B cell (primary cell): ENCODE measurements at regions of chr1 and their contacts with region 1.

Region 1: GRCh38 chr1:54094001-54094729 is 40.8 kb downstream of the TCEANC2 start:
- DNase-seq: no peak
- ATAC-seq: no peak
- H3K4me3 ChIP-seq: no peak overlapping the region
- H3K4me3 Mint-ChIP-seq: no peak overlapping the region
- H3K27ac ChIP-seq: no peak overlapping the region
- H3K27ac Mint-ChIP-seq: no peak overlapping the region
- H3K4me1 ChIP-seq: peaks cover 0 to 6% of the 10 kb centered on the region in 2 donors
- H3K4me1 Mint-ChIP-seq: no peaks in the 10 kb centered on the region
- H3K27me3 ChIP-seq: no peaks in the 10 kb centered on the region
- H3K27me3 Mint-ChIP-seq: no peaks in the 10 kb centered on the region
- CTCF ChIP-seq: no peak

Region 2: DNA sequence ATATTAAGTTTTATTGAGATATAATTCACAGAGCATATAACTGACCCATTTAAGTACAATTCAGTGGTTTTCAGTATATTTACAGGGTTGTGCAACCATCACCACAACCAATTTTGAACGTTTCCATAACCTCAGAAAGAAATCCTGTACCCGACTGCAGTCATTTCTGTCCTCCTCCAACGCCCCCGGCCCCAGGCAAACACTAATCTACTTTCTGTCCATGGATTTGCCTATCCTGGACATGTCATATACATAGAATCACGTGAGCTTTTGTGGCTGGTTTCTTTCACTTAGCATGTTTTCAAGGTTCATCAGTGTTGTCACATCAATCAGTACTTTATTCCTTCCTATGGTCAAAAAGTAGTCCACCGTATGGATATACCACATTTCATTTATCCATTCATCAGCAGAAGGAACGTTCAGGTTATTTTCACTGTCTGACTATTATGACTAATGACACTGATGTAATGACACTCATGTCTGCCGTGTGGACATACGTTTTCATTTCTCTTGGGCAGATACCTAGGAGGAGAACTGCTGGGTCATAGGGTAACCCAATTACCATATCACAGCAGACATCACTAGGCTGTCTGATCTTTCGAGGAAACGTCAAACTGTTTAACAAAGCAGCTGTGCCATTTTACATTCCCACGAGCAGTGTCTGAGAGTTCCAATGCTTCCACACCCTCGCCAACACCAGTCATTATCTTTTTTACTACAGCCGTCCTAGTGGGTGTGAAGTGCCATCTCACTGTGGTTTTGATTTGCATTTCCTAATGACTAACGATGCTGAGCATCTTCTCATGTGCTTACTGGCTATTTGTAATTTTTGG is 136.6 kb after region 1 on chr1:
- CTCF ChIA-PET with region 1: no interaction called
- POLR2A ChIA-PET with region 1: interaction called, 12 read pairs
- intact Hi-C with region 1: no loop called
- DNase-seq: no peak
- ATAC-seq: no peak
- H3K4me3 ChIP-seq: no peak overlapping the region
- H3K4me3 Mint-ChIP-seq: no peak overlapping the region
- H3K27ac ChIP-seq: no peak overlapping the region
- H3K27ac Mint-ChIP-seq: no peak overlapping the region
- H3K4me1 ChIP-seq: no peaks in the 10 kb centered on the region
- H3K4me1 Mint-ChIP-seq: peaks cover 2% of the 10 kb centered on the region
- H3K27me3 ChIP-seq: no peaks in the 10 kb centered on the region
- H3K27me3 Mint-ChIP-seq: no peaks in the 10 kb centered on the region
- CTCF ChIP-seq: no peak